ENCODE measurements at regions of chr2 and their contacts with region 1.

Region 1: GRCh38 chr2:11344342-11344955 is at the start of gene ROCK2:
- DNase-seq: peak; percentile 96
- total RNA-seq, gene ROCK2: 48.6 TPM

Region 2: DNA sequence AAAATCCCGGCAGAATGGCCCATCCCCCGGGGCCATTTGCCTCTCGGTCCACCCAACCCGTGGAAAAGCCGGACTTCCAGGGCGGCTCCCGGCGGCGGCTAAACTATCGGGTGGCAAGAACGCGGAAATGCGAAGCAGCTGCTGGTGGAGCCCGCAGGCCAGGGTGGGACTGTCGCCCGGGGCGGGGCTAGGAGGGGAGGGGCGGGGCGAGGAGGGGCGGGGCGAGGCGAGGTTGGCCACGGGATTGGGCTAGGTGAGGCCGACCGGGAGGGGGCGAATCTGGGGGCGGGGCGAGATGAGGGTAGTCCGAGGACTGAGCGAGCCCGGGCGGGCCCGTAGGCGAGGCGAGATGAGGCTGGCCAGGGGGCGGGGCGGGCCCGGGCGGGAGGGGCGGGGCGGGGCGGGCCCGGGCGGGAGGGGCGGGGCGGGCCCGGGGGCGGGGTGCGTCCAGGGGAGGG is 189.5 kb before region 1 on chr2:
- intact Hi-C with region 1: loop called (anchors 2 kb)
- DNase-seq: peak; percentile 99

Region 3: DNA sequence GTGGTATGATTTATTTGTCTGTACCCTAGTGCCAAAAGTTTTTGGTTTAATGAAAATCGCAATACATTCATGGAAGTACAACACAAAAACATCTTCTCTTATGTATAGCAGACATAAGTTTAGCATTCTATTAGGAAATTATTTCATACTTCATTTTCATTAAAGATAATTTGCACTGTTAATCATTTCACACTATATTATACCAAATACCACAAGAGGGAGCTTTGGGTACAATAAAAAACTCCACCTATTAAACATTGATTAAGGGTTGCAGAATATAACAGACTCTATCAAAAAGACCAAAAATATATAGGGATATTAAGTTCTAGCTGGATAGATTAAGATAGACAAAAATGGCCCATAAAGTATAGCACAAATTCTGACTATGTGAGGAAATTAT is 110.1 kb before region 1 on chr2:
- intact Hi-C with region 1: loop called (anchors 2 kb)
- DNase-seq: no peak

Region 4: GRCh38 chr2:11292464-11293255 is 51.8 kb before region 1 on chr2:
- intact Hi-C with region 1: no loop called
- DNase-seq: no peak

Region 5: GRCh38 chr2:11405599-11406266 is 61.3 kb after region 1 on chr2:
- intact Hi-C with region 1: loop called (anchors 2 kb)
- DNase-seq: no peak